ENCODE measurements at regions of chr17 and their contacts with region 1.

Region 1: DNA sequence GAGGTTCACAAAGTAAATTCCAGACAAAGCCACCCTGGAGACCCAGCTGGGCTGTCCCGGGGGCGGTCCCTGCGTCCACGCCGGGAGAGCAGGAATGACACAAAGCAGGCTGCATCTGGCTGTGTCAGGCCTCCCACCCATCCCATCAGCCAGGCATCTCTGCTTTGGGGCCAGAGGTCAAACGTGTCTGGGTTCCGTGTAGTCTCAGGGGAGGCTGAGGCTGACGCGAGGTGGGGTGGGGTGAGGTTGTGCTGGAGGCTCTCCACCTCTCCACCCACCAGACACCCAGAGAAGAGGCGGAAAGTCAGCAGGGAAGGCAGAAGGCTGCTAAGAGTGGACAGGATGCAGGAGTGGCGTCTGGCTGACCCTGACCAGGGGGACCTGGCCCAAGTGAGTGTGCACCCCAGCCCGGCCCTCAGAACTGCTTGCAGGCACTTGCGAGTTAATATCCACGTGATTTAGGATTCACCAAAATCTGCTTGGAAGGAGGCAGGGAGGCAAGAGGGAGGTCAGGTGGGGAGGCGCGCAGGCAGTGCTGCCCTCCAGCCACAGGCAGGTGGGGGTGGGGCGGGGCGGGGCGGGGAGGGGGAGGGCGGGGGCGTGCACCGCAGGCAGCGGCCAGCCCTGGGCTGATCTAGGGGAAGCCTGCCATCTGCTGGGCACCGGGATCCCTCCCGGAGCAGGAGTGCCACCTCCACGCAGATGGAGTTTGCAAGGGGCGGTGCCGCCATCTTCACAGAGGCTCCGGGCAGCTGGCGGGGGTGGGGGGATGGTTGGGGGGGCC is 44.3 kb downstream of the TBC1D16 start:
- DNase-seq: peak; percentile 80 to 83
- ATAC-seq: peak; percentile 79 to 92 (median 88)
- H3K4me3 ChIP-seq: peak overlapping the region; percentile 9 to 56 (median 51)
- H3K27ac ChIP-seq: peak overlapping the region in 7 of 10 donors; percentile 43 to 88 (median 87)
- H3K4me1 ChIP-seq: peaks cover 22 to 56% (median 45%) of the 10 kb centered on the region in 9 donors
- H3K27me3 ChIP-seq: no peaks in the 10 kb centered on the region
- CTCF ChIP-seq: peak; percentile 38 to 76 (median 60)

Region 2: GRCh38 chr17:79749156-79749815 is 242.0 kb before region 1 on chr17:
- intact Hi-C with region 1: loop called in 8 of 10 experiments (anchors 5 to 10 kb)
- DNase-seq: no peak
- ATAC-seq: no peak
- H3K4me3 ChIP-seq: no peak overlapping the region
- H3K27ac ChIP-seq: no peak overlapping the region
- H3K4me1 ChIP-seq: peaks cover 0 to 22% (median 11%) of the 10 kb centered on the region in 9 donors
- H3K27me3 ChIP-seq: peaks cover 19 to 94% (median 84%) of the 10 kb centered on the region in 7 donors
- CTCF ChIP-seq: no peak

Region 3: DNA sequence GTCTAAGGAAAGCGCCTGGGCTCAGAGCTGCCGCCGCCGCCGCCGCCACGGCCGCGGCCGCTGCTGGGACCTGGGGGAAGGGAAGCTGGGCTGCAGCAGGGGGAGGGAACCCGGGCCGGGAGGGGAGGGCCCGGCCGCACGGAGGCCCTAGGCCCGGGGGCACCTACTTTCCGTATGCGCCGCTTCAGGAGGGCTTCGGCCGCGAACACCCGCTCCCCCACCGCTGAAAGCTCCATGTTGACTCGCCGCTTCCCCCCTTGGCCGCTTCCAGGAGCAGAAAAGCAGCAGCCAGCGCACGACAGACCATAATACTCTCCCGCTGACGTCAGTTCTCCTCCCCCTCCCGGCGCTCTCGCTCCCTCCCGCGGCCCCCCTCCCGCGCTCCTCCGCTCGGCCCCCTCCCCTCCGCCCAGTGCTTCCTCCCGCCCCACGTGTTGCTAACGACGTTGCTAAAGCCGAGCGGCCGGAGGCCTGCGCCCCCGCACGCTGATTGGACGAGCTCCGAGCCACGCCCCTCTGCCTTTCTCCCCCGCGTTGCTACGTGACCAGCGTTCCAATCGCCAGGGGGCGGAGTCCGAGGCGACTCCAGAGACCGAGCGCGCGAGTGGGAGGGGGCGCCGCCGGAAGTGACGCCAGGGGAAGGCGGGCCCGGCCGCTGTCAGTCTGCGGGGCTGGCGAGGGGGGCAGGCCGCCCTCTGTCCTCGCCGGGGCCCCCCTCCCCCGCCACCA is 194.4 kb before region 1 on chr17 and contains the start of gene CBX8:
- intact Hi-C with region 1: loop called in 3 of 10 experiments (anchors 5 kb)
- DNase-seq: peak; percentile 100
- ATAC-seq: peak; percentile 92 to 99 (median 97)
- H3K4me3 ChIP-seq: peak within 1 kb of the TSS; percentile 51 to 81 (median 76)
- H3K27ac ChIP-seq: peak within 1 kb of the TSS; percentile 76 to 92 (median 85)
- H3K4me1 ChIP-seq: peaks cover 35 to 72% (median 52%) of the 10 kb centered on the region in 9 donors
- H3K27me3 ChIP-seq: peaks cover 42 to 73% (median 65%) of the 10 kb centered on the region in 7 donors
- CTCF ChIP-seq: peak in 6 of 9 donors; percentile 18 to 56 (median 39)
- total RNA-seq, gene CBX8: 4.3 to 9.3 (median 5.6) TPM

Region 4: DNA sequence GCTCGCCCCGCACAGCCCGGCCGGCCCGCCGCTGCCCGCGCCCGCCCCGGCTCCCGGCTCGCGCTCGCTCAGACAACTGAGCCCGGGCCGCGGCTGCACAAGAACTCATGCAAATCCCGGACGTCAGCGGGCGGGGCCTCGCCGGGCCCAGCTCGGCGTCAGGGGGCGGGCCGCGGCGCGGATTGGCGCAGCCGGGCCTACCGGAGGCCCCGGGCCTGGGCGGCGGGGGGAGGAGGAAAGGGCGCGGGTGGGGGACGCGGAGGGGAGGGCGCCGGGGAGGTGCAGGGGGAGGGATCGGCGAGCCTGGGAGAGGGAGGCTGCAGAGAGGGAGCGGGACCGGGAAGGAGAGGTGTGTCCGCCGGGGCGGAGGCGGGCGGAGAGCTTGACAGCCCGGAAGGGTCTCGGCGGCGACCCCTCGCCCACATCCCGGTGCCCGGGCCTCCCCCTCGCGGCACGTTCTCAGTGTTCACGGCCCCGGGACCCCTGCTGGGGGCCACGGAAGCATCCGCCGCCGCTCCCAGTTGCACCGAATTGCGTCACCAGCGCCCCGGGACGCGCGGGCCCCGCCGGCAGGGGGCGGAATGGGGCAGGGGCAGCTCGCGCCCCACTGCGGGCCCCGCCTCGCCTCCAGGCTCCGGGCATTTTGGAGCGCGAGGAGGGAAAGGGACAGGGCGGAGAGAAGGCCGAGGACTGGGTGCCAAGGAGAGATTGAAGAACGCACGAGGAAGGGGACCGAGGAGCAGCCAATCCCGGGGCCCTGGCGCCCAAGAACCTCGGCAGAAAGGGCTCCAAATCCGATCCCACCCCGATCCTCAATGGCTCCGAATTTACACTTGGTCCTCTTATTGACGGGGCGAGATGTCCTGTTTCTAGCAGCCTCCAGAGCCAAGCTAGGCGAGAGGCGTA is 151.7 kb before region 1 on chr17 and contains the start of gene CBX4:
- intact Hi-C with region 1: loop called in 4 of 10 experiments (anchors 5 to 10 kb)
- DNase-seq: peak; percentile 94 to 96
- ATAC-seq: peak; percentile 73 to 88 (median 81)
- H3K4me3 ChIP-seq: peak within 1 kb of the TSS; percentile 53 to 99 (median 83)
- H3K27ac ChIP-seq: peak within 1 kb of the TSS; percentile 87 to 97 (median 92)
- H3K4me1 ChIP-seq: peaks cover 38 to 76% (median 72%) of the 10 kb centered on the region in 9 donors
- H3K27me3 ChIP-seq: peaks cover 20 to 51% (median 40%) of the 10 kb centered on the region in 7 donors
- CTCF ChIP-seq: peak; percentile 53 to 77 (median 70)
- total RNA-seq, gene CBX4: 21.6 to 38.2 (median 26.4) TPM

Region 5: GRCh38 chr17:79923974-79924638 is 67.2 kb before region 1 on chr17:
- intact Hi-C with region 1: loop called in 1 of 10 experiments (anchors 10 kb)
- DNase-seq: no peak
- ATAC-seq: peak in 1 of 8 donors; percentile 32
- H3K4me3 ChIP-seq: no peak overlapping the region
- H3K27ac ChIP-seq: no peak overlapping the region
- H3K4me1 ChIP-seq: peaks cover 0 to 20% (median 11%) of the 10 kb centered on the region in 9 donors
- H3K27me3 ChIP-seq: peaks cover 8 to 88% (median 63%) of the 10 kb centered on the region in 7 donors
- CTCF ChIP-seq: peak in 7 of 9 donors; percentile 29 to 49 (median 37)

Measured in heart right ventricle (tissue), 16 donors.